ENCODE measurements at regions of chr2 and their contacts with region 1.

Region 1: GRCh38 chr2:30208452-30208851 is 22.9 kb upstream of the LBH start:
- DNase-seq: peak; percentile 81
- H3K4me3 ChIP-seq: no peak overlapping the region
- H3K27ac ChIP-seq: no peak overlapping the region
- H3K4me1 ChIP-seq: peaks cover 0 to 10% of the 10 kb centered on the region in 2 experiments; a peak in 2 of 4 replicates
- H3K27me3 ChIP-seq: no peaks in the 10 kb centered on the region; the same call in 1 of the 2 replicates
- CTCF ChIP-seq: peak; percentile 99
- EP300 ChIP-seq: no peak
- RAD21 ChIP-seq: peak; percentile 100

Region 2: DNA sequence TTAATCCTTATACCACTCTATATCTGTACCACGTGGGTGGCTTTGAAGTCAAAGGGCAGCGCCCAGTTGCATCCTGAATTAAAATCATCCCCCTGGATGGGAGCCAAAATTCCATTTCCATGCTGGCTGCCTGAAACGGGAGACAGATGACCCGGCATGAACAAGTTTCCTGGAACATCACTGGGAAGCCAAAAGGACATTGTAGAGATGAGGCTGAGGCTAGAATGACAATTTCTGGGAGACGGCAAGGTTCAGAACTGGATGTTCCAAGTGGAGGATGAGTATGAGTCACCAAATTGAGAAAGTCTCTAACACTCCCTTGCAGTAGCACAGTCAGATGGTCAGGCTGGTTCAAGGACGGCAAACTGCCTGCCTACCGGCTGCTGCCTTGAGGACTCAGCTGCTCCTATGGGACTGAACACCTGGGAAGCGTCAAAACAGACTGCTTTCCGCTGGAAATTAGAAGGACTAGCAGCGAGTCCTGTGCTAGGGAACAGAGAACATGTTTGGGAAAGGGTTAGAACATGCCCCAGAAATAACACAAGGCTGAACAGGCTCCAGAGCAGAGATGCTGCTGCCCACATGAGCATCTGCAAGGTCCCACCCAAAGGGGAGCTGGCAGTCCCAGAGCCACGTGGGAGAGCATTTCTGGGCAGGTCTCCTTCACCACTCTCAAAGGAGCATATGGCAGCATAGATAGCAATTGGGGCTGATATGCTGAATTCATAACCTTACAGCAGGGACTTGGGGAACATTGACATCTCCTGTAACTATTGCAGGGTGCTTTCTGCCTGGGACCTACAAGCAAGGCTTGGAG is 29.6 kb before region 1 on chr2:
- CTCF ChIA-PET with region 1: interaction called, 15 read pairs
- POLR2A ChIA-PET with region 1: no interaction called
- DNase-seq: peak; percentile 23
- H3K4me3 ChIP-seq: no peak overlapping the region
- H3K27ac ChIP-seq: no peak overlapping the region
- H3K4me1 ChIP-seq: no peaks in the 10 kb centered on the region
- H3K27me3 ChIP-seq: no peaks in the 10 kb centered on the region
- CTCF ChIP-seq: no peak
- EP300 ChIP-seq: no peak
- RAD21 ChIP-seq: no peak

Region 3: GRCh38 chr2:30225131-30225762 is 16.8 kb after region 1 on chr2:
- CTCF ChIA-PET with region 1: interaction called, 76 read pairs
- POLR2A ChIA-PET with region 1: interaction called, 4 read pairs
- DNase-seq: no peak
- H3K4me3 ChIP-seq: peak overlapping the region; percentile 24 to 58; a peak in 3 of 4 replicates
- H3K27ac ChIP-seq: peak overlapping the region; percentile 17 to 20; a peak in 2 of 4 replicates
- H3K4me1 ChIP-seq: peaks cover 4 to 10% of the 10 kb centered on the region in 2 experiments; a peak in 3 of 4 replicates
- H3K27me3 ChIP-seq: no peaks in the 10 kb centered on the region
- CTCF ChIP-seq: no peak
- EP300 ChIP-seq: no peak
- RAD21 ChIP-seq: no peak

Region 4: DNA sequence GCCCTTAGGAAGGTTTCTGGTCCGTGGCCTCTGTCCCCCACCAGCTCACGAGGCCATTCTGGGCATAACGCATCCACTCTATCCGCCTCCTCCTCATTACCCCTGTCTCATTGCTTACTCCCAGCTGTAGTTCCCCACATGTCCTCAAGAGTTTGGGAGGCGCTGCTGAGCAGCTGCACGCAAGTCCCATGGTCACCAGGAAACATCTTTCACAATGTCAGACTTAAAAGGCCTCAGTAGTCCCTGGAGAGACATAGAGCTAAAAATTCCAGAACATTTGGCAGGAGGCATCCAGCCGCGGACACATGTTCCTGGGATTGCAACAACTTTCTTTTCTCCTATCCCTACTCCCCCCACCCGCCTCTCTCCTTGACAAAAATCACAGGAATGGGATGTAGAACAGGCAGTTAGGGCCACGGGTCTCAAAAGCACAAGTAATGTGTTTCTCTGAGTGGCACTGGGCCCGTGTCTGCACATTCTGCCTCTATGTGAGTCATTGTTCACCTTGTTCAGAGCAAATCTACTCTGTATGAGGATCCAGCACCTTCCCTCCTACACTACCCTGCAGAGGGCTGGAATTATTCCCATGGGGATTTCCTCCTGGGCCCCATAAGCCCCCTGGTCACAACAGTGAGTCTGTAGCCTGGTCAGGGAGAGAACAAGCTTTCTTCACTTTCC is 31.0 kb after region 1 on chr2:
- CTCF ChIA-PET with region 1: interaction called, 38 read pairs
- POLR2A ChIA-PET with region 1: no interaction called
- DNase-seq: peak; percentile 86
- H3K4me3 ChIP-seq: no peak overlapping the region; a peak in 2 of 4 replicates
- H3K27ac ChIP-seq: no peak overlapping the region
- H3K4me1 ChIP-seq: peaks cover 0 to 9% of the 10 kb centered on the region in 2 experiments; a peak in 2 of 4 replicates
- H3K27me3 ChIP-seq: no peaks in the 10 kb centered on the region
- CTCF ChIP-seq: peak; percentile 94
- EP300 ChIP-seq: no peak
- RAD21 ChIP-seq: peak; percentile 68

Region 5: DNA sequence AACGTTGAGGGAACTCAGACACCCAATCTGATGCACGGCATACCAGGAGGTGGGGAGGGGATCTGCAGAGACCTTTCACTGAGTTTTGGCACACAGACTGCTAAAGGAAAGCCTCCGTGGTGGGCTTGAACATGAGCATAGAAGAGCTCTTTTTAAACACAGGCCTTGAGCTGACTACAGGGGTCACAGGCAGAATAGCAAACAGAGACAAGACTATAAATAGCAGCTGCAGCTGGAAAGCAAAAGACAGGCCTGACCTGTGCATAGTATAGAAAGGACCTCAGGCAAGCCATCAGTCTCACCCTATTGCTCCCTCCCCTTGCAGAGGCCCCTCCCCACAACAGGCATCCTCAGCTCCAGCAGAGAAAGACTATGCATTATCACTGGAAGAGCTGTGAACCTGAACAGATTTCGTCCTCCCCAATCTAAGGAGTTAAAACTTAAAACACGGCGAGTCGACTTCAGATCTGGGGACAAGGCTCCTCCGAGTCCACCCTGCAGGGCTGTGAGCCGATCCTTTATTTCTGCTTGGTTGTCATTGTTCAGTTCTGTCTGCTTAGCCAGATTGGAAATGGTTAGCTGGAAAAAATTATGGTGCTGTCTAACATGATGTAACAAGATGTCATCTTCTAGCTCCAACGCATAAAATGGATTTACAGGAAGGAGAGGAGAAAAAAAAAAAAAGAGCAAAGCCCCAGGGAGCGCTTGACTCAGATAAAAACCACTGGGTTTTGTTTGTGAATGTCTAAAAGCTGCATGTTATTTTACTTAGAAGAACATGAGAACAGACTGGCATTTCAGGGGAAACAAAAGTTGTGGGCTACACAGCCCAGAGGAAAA is 213.4 kb after region 1 on chr2:
- CTCF ChIA-PET with region 1: interaction called, 10 read pairs
- POLR2A ChIA-PET with region 1: interaction called, 4 read pairs
- DNase-seq: peak; percentile 88
- H3K4me3 ChIP-seq: peak overlapping the region in 1 of 2 experiments; percentile 23; a peak in 1 of 4 replicates
- H3K27ac ChIP-seq: peak overlapping the region; percentile 76 to 94
- H3K4me1 ChIP-seq: peaks cover 20 to 24% of the 10 kb centered on the region in 2 experiments; a peak in 3 of 4 replicates
- H3K27me3 ChIP-seq: no peaks in the 10 kb centered on the region
- CTCF ChIP-seq: no peak
- EP300 ChIP-seq: peak in 1 of 2 experiments; percentile 69; a peak in 2 of 4 replicates
- RAD21 ChIP-seq: peak; percentile 48

Region 6: GRCh38 chr2:30686000-30686399 is 477.5 kb after region 1 on chr2:
- CTCF ChIA-PET with region 1: interaction called, 40 read pairs
- POLR2A ChIA-PET with region 1: no interaction called
- DNase-seq: peak; percentile 50
- H3K4me3 ChIP-seq: no peak overlapping the region; a peak in 1 of 4 replicates
- H3K27ac ChIP-seq: no peak overlapping the region
- H3K4me1 ChIP-seq: peaks cover 0 to 25% of the 10 kb centered on the region in 2 experiments; a peak in 1 of 4 replicates
- H3K27me3 ChIP-seq: no peaks in the 10 kb centered on the region
- CTCF ChIP-seq: peak; percentile 44
- EP300 ChIP-seq: no peak
- RAD21 ChIP-seq: peak; percentile 28; the same call in 1 of the 2 replicates

Region 7: DNA sequence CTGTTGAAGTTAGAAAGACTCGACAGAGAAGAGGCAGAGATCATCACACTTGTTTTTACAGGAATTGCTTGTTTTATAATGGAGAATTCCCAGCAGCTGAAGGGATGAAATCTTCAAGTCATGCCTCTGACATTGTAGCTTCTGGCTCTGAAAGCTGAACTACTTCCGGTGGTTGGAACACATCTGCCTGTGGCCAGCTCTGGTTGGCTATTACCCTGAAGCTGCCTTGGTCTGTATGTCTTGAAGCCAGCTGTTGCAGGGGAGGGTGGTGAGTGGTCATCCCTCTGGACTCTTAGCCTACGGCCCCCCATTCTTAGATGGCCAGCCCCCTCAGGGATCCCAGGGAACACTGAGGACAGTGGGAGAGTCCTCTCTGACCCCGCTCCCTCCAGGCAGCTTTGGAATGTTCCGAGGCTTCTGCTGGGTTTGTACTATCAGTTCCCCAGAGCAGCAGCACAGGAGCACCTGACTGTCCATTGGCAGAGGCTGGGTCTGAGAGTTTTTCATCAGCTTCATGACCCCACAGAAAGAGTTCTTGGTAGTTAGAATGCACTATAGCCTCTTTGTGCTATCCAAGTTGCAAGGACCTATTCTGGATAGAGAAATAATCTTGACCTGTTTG is 686.2 kb after region 1 on chr2:
- CTCF ChIA-PET with region 1: no interaction called
- POLR2A ChIA-PET with region 1: no interaction called
- DNase-seq: no peak
- H3K4me3 ChIP-seq: no peak overlapping the region
- H3K27ac ChIP-seq: no peak overlapping the region
- H3K4me1 ChIP-seq: no peaks in the 10 kb centered on the region; a peak in 1 of 4 replicates
- H3K27me3 ChIP-seq: no peaks in the 10 kb centered on the region
- CTCF ChIP-seq: no peak
- EP300 ChIP-seq: no peak
- RAD21 ChIP-seq: no peak